Right lobe of liver (tissue), 6 donors: ENCODE measurements at regions of chr1 and their contacts with region 1.

Region 1: GRCh38 chr1:206544562-206545257 is 37.4 kb downstream of the RASSF5 start:
- DNase-seq: peak; percentile 69 to 79 (median 74)
- ATAC-seq: peak; percentile 61 to 64 (median 61)
- H3K4me3 ChIP-seq: no peak overlapping the region
- H3K27ac ChIP-seq: no peak overlapping the region
- H3K4me1 ChIP-seq: peaks cover 0 to 52% (median 21%) of the 10 kb centered on the region in 4 donors
- H3K27me3 ChIP-seq: no peaks in the 10 kb centered on the region
- CTCF ChIP-seq: peak; percentile 63 to 90 (median 84)
- POLR2A ChIP-seq: no peak

Region 2: DNA sequence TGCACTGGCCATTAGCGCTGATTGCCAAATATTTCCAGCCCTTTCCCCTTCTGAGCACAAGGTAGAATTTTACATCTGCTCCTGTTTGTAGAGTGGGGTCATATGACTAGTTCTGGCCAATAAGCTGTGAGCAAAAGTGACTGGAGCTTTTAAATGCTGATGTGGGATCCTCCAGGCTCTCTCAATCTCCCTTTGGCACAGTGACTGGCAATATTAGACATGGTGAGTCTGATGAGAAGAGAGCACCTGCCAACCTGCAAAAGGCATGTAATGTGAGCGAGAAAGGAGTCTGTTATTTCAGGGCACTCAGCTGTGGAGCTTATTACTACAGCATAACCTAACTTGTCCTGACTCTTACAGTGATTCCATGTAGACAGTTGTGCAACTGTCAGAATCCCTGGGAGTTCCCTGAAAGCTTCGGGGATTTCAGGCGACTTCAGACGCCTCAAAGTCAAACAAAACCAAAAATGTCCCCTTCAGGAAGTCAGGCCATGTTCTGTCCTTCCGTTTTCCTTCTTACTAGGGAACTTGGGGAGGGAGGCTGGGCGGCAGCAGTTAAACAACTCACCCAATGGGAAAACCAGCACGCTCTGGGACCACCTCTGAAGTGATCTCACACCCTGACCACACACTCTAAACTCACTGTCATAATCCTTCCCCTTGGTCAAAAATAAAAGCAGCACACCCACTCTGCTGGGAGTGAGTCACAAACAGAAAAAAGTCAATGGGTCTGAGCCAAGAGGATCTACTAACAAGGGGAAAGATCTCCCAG is 40.9 kb before region 1 on chr1:
- intact Hi-C with region 1: loop called in 1 of 2 experiments (anchors 5 kb)
- DNase-seq: peak in 1 of 3 donors; percentile 52
- ATAC-seq: peak in 1 of 4 donors; percentile 18
- H3K4me3 ChIP-seq: no peak overlapping the region
- H3K27ac ChIP-seq: peak overlapping the region in 1 of 3 donors; percentile 57
- H3K4me1 ChIP-seq: peaks cover 0 to 41% (median 6%) of the 10 kb centered on the region in 4 donors
- H3K27me3 ChIP-seq: no peaks in the 10 kb centered on the region
- CTCF ChIP-seq: no peak
- POLR2A ChIP-seq: no peak